ENCODE measurements at regions of chr1 and their contacts with region 1.

Region 1: DNA sequence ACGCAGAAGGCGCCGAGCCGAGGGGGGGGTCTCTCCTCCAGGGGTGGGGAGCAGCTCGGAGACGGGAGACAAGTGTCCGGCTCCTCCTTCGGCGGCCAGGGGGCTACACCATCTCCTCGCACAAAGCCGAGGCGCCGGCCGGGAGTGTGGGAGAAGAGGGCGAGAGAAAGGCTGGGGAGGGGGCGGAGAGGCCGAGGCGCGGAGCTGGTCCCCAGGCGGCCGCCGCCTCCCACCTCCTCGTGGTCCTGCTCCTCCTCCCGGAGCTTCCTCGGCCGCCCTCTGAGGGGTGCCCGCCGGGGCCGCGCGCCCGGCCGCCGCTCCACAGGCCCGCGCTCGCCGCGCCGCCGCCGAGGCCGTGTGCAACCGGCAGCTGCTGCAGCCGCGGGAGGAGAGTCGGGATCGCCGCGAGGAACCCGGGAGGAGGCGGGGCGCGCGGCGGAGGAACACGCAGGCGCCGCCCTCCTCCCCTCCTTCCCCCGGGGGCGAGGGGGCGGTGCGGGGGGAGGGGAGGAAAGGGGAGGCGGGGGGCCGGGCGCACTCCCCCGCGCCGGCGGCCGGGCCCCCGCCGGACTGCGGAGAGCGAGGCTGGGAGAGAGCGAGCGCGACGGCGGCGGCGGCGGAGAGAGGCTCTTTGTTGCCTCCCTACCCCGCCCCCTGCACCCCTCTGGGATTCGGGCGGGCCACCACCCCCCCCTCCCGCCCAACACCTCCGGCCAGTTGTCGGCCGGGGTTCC is at the start of gene ENAH:
- DNase-seq: peak; percentile 80 to 86 (median 84)
- H3K4me3 ChIP-seq: peak within 1 kb of the TSS; percentile 77 to 93 (median 82)
- H3K27ac ChIP-seq: peak within 1 kb of the TSS; percentile 94 to 97 (median 95)
- H3K4me1 ChIP-seq: peaks cover 9 to 51% of the 10 kb centered on the region in 2 donors
- H3K27me3 ChIP-seq: no peaks in the 10 kb centered on the region
- CTCF ChIP-seq: peak in 1 of 6 experiments; percentile 14
- POLR2A ChIP-seq: peak; percentile 93 to 95
- total RNA-seq, gene ENAH: 36.7 to 130 (median 81.1) TPM

Region 2: DNA sequence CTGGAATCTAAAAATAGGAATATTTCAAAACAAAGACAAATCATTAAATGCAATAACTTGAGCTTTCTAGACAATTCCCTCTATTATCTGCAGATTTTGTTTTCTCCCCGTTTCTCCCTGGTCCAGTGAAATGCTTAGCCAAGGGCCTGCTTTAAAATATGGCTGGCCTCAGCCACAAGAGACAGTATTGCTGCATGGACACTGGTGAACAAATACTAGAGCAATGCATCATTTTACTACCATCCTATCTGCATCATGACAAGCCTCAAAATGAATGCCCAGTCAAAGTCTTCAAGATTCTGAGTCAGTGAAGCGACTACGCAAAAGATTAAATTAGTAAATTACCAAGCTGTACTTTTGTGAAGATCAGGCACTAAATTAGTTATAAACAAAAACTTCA is 80.5 kb before region 1 on chr1:
- intact Hi-C with region 1: loop called in 1 of 2 experiments (anchors 5 kb)
- DNase-seq: peak in 3 of 7 donors; percentile 22 to 51 (median 37)
- H3K4me3 ChIP-seq: no peak overlapping the region
- H3K27ac ChIP-seq: peak overlapping the region in 1 of 5 donors; percentile 18
- H3K4me1 ChIP-seq: peaks cover 17 to 20% of the 10 kb centered on the region in 2 donors
- H3K27me3 ChIP-seq: no peaks in the 10 kb centered on the region
- CTCF ChIP-seq: peak; percentile 16 to 50 (median 41)
- POLR2A ChIP-seq: no peak

Region 3: GRCh38 chr1:225766967-225767633 is 114.2 kb after region 1 on chr1:
- intact Hi-C with region 1: loop called (anchors 5 to 10 kb)
- DNase-seq: peak; percentile 81 to 96 (median 91)
- H3K4me3 ChIP-seq: no peak overlapping the region
- H3K27ac ChIP-seq: peak overlapping the region; percentile 40 to 97 (median 68)
- H3K4me1 ChIP-seq: peaks cover 20 to 65% of the 10 kb centered on the region in 2 donors
- H3K27me3 ChIP-seq: no peaks in the 10 kb centered on the region
- CTCF ChIP-seq: peak in 2 of 6 experiments; percentile 3 to 19
- POLR2A ChIP-seq: peak in 1 of 2 donors; percentile 60

Region 4: DNA sequence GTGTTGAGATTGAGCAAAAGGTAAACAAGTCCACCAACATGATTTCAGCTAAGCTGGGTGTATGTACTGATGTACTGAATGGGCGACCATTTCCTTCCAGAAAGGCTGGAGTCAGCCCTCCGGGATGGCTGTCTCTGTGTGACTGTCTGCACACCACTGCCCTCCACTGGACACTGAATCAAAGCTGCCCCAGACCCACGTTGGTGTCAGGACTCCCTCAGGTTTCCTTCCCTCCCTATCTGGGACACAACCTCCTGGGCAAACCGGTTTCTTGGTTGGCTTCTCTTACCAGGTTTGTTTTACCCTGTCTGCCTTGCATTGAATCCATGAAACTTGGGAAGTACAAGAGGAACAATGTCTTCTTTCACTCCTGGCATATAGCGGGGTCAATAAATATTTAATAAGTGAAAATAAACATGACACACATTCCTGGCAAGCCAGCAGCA is 119.5 kb after region 1 on chr1:
- intact Hi-C with region 1: loop called (anchors 5 to 10 kb)
- DNase-seq: peak; percentile 85 to 94 (median 90)
- H3K4me3 ChIP-seq: no peak overlapping the region
- H3K27ac ChIP-seq: peak overlapping the region in 3 of 5 donors; percentile 43 to 65 (median 57)
- H3K4me1 ChIP-seq: peaks cover 9 to 54% of the 10 kb centered on the region in 2 donors
- H3K27me3 ChIP-seq: no peaks in the 10 kb centered on the region
- CTCF ChIP-seq: peak; percentile 58 to 96 (median 90)
- POLR2A ChIP-seq: no peak

Measured in adrenal gland (tissue), 19 donors.